Activated B cell treated with CpG ODN at 0.5 μM for 24 hours (primary cell): ENCODE measurements at regions of chr2 and their contacts with region 1.

Region 1: GRCh38 chr2:71331581-71332434 is at the start of gene ZNF638:
- DNase-seq: peak; percentile 86
- ATAC-seq: peak; percentile 99
- H3K4me3 Mint-ChIP-seq: peak within 1 kb of the TSS; percentile 100
- H3K27ac Mint-ChIP-seq: peak within 1 kb of the TSS; percentile 100
- H3K4me1 Mint-ChIP-seq: peaks cover 42% of the 10 kb centered on the region
- H3K27me3 Mint-ChIP-seq: no peaks in the 10 kb centered on the region
- CTCF ChIP-seq: no peak
- total RNA-seq, gene ZNF638: 125 and 152 TPM in 2 replicates

Region 2: GRCh38 chr2:71068218-71069035 is 263.4 kb before region 1 on chr2 and contains the start of gene NAGK:
- CTCF ChIA-PET with region 1: interaction called, 4 read pairs
- POLR2A ChIA-PET with region 1: interaction called, 27 read pairs
- intact Hi-C with region 1: loop called (anchors 1 kb)
- DNase-seq: peak; percentile 98
- ATAC-seq: peak; percentile 68
- H3K4me3 Mint-ChIP-seq: peak within 1 kb of the TSS; percentile 97
- H3K27ac Mint-ChIP-seq: peak within 1 kb of the TSS; percentile 99
- H3K4me1 Mint-ChIP-seq: peaks cover 91% of the 10 kb centered on the region
- H3K27me3 Mint-ChIP-seq: no peaks in the 10 kb centered on the region
- CTCF ChIP-seq: no peak
- total RNA-seq, gene NAGK: 175 and 208 TPM in 2 replicates

Region 3: GRCh38 chr2:71226965-71227560 is 104.7 kb before region 1 on chr2 and contains the start of gene PAIP2B:
- CTCF ChIA-PET with region 1: interaction called, 3 read pairs
- POLR2A ChIA-PET with region 1: interaction called, 22 read pairs
- intact Hi-C with region 1: loop called (anchors 1 kb)
- DNase-seq: peak; percentile 89
- ATAC-seq: peak; percentile 92
- H3K4me3 Mint-ChIP-seq: peak within 1 kb of the TSS; percentile 99
- H3K27ac Mint-ChIP-seq: peak within 1 kb of the TSS; percentile 95
- H3K4me1 Mint-ChIP-seq: peaks cover 28% of the 10 kb centered on the region
- H3K27me3 Mint-ChIP-seq: peaks cover 9% of the 10 kb centered on the region
- CTCF ChIP-seq: no peak
- total RNA-seq, gene PAIP2B: 3.7 and 4.0 TPM in 2 replicates

Region 4: DNA sequence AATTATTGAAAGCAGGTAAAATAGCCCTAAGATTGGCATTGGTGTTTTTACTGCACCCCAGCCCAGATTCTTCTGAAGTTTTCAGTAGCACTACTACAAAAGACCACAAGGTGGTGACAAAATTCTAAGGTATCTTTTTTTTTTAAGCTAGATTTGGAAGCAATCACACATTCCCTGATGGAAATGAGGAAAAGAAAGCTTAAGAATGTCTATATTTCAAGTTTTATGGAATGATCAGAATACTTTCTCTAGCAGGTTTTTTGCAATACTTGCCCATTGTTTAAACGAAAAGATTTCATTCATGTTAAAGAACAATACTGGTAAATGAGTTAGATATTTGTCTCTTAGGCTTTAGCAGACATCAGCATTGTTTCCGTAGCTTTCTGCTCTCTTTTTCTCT is 32.3 kb before region 1 on chr2:
- CTCF ChIA-PET with region 1: interaction called, 16 read pairs
- POLR2A ChIA-PET with region 1: interaction called, 10 read pairs
- intact Hi-C with region 1: loop called (anchors 1 kb)
- DNase-seq: no peak
- ATAC-seq: no peak
- H3K4me3 Mint-ChIP-seq: no peak overlapping the region
- H3K27ac Mint-ChIP-seq: no peak overlapping the region
- H3K4me1 Mint-ChIP-seq: no peaks in the 10 kb centered on the region
- H3K27me3 Mint-ChIP-seq: peaks cover 2% of the 10 kb centered on the region
- CTCF ChIP-seq: peak; percentile 86

Region 5: GRCh38 chr2:71313016-71313766 is 18.6 kb before region 1 on chr2:
- CTCF ChIA-PET with region 1: no interaction called
- POLR2A ChIA-PET with region 1: no interaction called
- intact Hi-C with region 1: no loop called
- DNase-seq: no peak
- ATAC-seq: no peak
- H3K4me3 Mint-ChIP-seq: no peak overlapping the region
- H3K27ac Mint-ChIP-seq: no peak overlapping the region
- H3K4me1 Mint-ChIP-seq: no peaks in the 10 kb centered on the region
- H3K27me3 Mint-ChIP-seq: no peaks in the 10 kb centered on the region
- CTCF ChIP-seq: no peak

Region 6: GRCh38 chr2:71385012-71385411 is 53.2 kb after region 1 on chr2:
- CTCF ChIA-PET with region 1: no interaction called
- POLR2A ChIA-PET with region 1: no interaction called
- intact Hi-C with region 1: no loop called
- DNase-seq: no peak
- ATAC-seq: no peak
- H3K4me3 Mint-ChIP-seq: no peak overlapping the region
- H3K27ac Mint-ChIP-seq: no peak overlapping the region
- H3K4me1 Mint-ChIP-seq: no peaks in the 10 kb centered on the region
- H3K27me3 Mint-ChIP-seq: no peaks in the 10 kb centered on the region
- CTCF ChIP-seq: no peak

Region 7: DNA sequence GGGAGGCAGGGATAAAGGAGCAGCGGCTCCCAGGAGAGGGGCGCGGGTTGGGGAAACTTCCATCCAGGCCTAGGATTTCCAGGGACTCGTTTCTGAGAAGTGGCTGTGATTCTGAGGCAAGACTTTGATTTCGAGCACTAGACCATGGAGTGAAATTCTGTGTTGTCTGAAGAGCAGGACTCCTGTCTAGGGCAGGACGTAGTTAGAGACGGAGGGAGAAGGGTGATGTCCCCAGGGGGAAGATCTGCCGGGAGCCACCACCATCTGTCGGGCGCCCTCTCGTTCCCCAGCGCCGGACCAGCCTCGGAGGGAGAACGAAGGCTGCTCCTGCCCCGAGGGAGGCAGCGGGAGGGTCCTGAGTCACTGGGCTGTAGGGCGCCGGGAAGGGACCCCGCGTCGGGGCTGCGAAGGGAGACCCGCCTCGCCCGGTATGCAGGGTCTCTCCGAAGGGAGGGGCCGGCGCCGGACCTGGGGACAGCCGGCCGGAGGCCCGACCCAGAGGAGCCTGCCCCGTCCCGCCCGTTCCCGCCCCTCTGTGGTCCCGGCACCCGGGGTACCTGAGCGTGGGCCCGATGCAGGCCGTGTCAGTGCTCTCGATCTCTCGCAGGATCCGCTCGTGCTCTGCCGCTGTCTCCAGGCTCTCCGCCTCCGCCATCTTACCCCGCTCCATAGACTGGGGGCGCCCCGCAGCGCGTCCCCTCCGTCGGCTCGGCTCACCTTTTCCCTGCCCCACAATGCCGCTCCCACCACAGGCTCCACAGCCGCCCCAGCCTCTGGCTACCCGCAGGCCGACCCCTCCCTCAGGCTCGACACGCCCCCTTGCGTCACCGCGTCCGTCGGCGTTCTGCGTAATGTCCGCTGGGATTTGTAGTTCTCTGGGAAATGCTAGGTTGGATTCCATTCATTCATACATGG is 1493.7 kb after region 1 on chr2 and contains the start of gene EXOC6B:
- CTCF ChIA-PET with region 1: no interaction called
- POLR2A ChIA-PET with region 1: no interaction called
- intact Hi-C with region 1: loop called (anchors 5 kb)
- DNase-seq: peak; percentile 79
- ATAC-seq: peak; percentile 89
- H3K4me3 Mint-ChIP-seq: peak within 1 kb of the TSS; percentile 97
- H3K27ac Mint-ChIP-seq: peak within 1 kb of the TSS; percentile 68
- H3K4me1 Mint-ChIP-seq: peaks cover 24% of the 10 kb centered on the region
- H3K27me3 Mint-ChIP-seq: peaks cover 12% of the 10 kb centered on the region
- CTCF ChIP-seq: no peak
- total RNA-seq, gene EXOC6B: 13.0 and 13.8 TPM in 2 replicates